ENCODE measurements at regions of chr10 and their contacts with region 1.

Region 1: GRCh38 chr10:25875556-25876165 is 58.4 kb upstream of the MYO3A start:
- DNase-seq: peak; percentile 85
- H3K4me3 Mint-ChIP-seq: no peak overlapping the region
- H3K27ac Mint-ChIP-seq: no peak overlapping the region
- H3K4me1 Mint-ChIP-seq: no peaks in the 10 kb centered on the region
- H3K27me3 Mint-ChIP-seq: peaks cover 4% of the 10 kb centered on the region

Region 2: DNA sequence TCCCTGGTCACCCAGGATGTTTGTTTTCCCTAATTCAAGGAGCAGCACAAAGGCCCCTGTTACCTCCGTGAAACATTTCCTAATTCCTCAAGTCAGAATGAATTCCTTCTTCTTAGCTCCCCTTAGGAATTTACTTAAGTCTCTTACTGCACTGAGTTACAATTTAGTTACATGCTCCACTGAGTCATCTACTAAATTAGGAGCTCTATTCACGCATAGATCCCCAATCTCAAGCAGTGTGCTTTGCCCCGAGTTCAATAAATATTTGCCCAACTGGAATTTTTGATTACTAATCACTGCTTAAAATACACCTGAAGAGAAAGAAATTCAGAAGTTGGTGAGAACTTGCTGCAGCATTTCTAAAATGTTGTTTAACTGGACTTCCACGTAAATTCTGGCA is 271.1 kb before region 1 on chr10:
- CTCF ChIA-PET with region 1: no interaction called
- intact Hi-C with region 1: no loop called
- DNase-seq: no peak
- H3K4me3 Mint-ChIP-seq: no peak overlapping the region
- H3K27ac Mint-ChIP-seq: no peak overlapping the region
- H3K4me1 Mint-ChIP-seq: no peaks in the 10 kb centered on the region
- H3K27me3 Mint-ChIP-seq: no peaks in the 10 kb centered on the region

Region 3: DNA sequence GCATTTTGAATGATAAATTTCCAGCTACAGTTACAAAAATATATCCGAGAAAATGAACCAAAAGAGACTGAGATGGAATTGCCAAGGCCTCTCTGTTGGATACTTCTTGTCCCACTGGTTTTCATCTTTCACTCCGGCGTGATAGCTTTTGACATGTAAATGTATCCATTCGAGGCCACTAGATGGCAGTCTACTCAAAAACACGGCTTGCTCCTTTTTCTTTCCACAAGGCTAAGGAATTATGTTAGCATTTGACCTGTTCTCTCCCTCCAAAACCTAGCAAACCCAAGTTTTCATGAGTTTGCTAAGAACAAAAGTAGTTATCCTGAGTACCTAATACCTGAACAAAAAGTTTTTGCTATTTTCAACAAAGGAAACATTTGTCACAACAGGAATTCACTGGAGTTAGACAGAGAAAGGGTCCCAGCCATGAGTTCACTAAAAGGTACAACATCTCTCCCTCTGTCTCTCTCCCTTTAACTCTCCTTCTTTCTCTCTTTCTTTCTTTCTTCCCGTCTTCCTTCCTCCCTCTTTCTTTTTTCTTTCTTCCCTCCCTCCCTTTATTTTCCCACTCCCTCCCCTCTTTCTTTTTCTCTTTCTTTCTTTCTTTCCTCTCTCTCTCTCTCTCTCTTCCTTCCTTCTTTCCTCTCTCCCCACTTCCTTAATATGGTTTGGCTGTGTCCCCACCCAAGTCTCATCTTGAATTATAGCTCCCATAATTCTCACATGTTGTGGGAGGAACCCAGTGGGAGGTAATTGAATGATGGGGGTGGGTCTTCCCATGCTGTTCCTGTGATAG is 149.5 kb before region 1 on chr10:
- CTCF ChIA-PET with region 1: no interaction called
- intact Hi-C with region 1: loop called (anchors 5 kb)
- DNase-seq: peak; percentile 43
- H3K4me3 Mint-ChIP-seq: no peak overlapping the region
- H3K27ac Mint-ChIP-seq: no peak overlapping the region
- H3K4me1 Mint-ChIP-seq: no peaks in the 10 kb centered on the region
- H3K27me3 Mint-ChIP-seq: peaks cover 25% of the 10 kb centered on the region